GM12878 (cell line): ENCODE measurements at regions of chr15 and their contacts with region 1.

Region 1: DNA sequence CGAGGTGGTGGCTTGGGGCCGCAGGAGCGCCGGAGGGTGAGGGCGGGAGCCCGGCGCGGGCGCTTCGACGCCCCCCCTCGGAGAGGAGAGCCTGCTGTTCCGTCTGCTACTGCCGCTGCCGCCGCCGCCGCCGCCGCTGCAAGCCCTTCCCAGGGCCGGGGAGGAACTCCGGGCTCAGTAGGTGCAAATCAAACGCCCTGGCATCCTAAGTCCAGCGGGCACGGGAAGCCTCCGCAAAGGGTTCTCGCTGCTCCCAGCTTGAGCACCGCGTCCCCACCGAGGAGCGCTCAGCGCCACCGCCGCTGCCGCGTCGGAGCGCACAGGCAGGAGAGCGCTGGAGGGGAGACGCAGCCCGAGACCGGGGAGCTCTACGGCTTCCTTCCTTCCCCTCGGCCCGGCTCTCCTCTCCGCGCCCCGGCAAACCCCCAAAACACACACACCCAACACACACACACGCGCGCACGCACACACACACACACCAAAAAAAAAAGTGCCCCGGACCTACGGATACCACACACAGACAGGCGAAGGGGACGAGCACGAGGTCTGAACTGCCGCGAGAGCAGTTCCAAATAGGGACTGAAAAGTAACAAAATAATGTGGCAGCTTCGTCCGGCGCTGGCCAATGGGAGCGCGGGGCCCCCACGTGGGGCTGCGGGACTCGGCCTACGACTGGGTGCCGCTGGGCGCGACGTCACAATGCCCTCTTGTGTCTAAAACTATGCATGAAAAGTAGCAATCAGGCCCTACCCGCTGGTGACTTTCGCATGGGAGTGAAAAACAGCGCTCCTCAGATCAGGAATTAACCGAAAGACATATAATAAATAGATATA is at the start of gene TLE3:
- DNase-seq: peak; percentile 85
- ATAC-seq: peak; percentile 74
- H3K4me3 ChIP-seq: peak within 1 kb of the TSS; percentile 97
- H3K27ac ChIP-seq: peak within 1 kb of the TSS; percentile 79
- H3K4me1 ChIP-seq: peaks cover 25% of the 10 kb centered on the region
- H3K27me3 ChIP-seq: peaks cover 3 to 8% of the 10 kb centered on the region in 2 experiments; a peak in 3 of 4 replicates
- CTCF ChIP-seq: peak; percentile 32 to 61 (median 45); a peak in 5 of 6 replicates
- EP300 ChIP-seq: no peak
- POLR2A ChIP-seq: peak; percentile 90
- RAD21 ChIP-seq: peak; percentile 63
- polyA plus RNA-seq, gene TLE3: 1.2 to 2.2 TPM

Region 2: DNA sequence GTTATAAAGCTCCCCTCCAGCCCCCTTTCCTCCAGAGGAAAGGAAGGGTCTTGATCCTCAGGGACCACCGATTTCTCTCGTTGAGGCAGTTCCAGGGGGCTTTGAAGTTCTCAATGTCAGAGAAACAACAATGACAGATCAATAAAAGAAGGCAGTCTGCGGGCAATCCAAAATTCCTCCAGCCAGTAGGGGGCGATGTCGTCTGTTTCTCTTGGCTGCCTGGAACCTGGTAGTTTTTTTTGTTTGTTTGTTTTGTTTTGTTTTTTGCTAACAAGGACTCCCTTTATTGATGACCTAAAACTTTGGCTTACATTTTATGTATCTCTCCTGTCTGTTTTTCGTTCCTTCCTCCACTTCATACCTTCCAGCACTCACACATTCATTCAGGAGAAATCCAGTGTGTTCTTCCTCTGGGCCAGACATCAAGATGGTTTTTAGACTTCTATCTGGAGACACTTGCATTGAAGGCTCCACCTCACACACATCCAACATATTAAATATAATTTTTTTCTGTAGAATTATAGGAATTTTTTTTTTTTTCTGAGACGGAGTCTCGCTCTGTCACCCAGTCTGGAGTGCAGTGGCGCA is 368.3 kb before region 1 on chr15:
- CTCF ChIA-PET with region 1: interaction called, 6 read pairs
- POLR2A ChIA-PET with region 1: no interaction called
- RAD21 ChIA-PET with region 1: interaction called, 6 read pairs
- SMC1A ChIA-PET with region 1: interaction called, 4 read pairs
- in situ Hi-C with region 1: no loop called
- intact Hi-C with region 1: loop called (anchors 5 kb)
- DNase-seq: no peak
- ATAC-seq: peak; percentile 55; the same call in 2 of the 3 replicates
- H3K4me3 ChIP-seq: no peak overlapping the region
- H3K27ac ChIP-seq: no peak overlapping the region
- H3K4me1 ChIP-seq: peaks cover 8% of the 10 kb centered on the region; the same call in 1 of the 2 replicates
- H3K27me3 ChIP-seq: peaks cover 0 to 5% of the 10 kb centered on the region in 2 experiments; a peak in 2 of 4 replicates
- CTCF ChIP-seq: peak; percentile 67 to 82 (median 71)
- EP300 ChIP-seq: no peak
- POLR2A ChIP-seq: no peak
- RAD21 ChIP-seq: peak; percentile 83

Region 3: DNA sequence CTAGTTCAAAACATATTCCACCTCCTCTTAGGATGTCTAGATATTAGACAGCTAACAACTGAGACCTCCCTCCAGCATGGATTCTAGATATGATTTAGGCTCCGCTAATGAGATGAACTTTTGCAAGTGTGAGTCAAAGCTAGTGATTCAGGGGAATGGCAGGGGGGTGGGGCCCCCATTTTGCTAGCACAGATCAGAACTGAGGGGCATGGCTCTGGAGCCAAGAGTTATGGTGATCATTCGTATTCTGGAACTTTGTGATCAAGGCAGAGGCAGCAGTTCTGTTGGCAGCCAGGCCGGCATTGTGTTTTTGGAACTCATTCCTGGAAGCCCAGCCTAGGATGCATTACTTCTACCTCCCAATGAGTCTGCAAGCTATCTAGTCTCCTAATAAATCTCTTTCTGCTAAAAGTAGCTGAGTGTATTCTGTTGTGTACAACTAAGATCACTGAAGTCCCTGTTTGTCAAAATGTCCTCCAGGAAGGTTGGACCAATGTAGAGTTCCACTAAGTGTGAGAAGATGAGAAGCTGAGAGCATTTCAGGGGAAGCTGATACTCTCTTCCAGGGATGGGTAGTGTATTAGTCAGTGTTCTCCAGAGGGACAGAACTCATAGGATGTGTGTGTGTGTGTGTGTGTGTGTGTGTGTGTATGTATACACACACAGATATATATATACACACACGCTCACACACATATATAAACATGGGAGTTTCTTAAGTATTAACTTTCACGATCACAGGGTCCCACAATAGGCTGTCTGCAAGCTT is 312.6 kb before region 1 on chr15:
- CTCF ChIA-PET with region 1: no interaction called
- POLR2A ChIA-PET with region 1: no interaction called
- RAD21 ChIA-PET with region 1: no interaction called
- SMC1A ChIA-PET with region 1: no interaction called
- in situ Hi-C with region 1: no loop called
- intact Hi-C with region 1: no loop called
- DNase-seq: no peak
- ATAC-seq: no peak
- H3K4me3 ChIP-seq: no peak overlapping the region
- H3K27ac ChIP-seq: no peak overlapping the region
- H3K4me1 ChIP-seq: no peaks in the 10 kb centered on the region
- H3K27me3 ChIP-seq: no peaks in the 10 kb centered on the region; a peak in 1 of 4 replicates
- CTCF ChIP-seq: no peak
- EP300 ChIP-seq: no peak
- POLR2A ChIP-seq: no peak
- RAD21 ChIP-seq: no peak

Region 4: DNA sequence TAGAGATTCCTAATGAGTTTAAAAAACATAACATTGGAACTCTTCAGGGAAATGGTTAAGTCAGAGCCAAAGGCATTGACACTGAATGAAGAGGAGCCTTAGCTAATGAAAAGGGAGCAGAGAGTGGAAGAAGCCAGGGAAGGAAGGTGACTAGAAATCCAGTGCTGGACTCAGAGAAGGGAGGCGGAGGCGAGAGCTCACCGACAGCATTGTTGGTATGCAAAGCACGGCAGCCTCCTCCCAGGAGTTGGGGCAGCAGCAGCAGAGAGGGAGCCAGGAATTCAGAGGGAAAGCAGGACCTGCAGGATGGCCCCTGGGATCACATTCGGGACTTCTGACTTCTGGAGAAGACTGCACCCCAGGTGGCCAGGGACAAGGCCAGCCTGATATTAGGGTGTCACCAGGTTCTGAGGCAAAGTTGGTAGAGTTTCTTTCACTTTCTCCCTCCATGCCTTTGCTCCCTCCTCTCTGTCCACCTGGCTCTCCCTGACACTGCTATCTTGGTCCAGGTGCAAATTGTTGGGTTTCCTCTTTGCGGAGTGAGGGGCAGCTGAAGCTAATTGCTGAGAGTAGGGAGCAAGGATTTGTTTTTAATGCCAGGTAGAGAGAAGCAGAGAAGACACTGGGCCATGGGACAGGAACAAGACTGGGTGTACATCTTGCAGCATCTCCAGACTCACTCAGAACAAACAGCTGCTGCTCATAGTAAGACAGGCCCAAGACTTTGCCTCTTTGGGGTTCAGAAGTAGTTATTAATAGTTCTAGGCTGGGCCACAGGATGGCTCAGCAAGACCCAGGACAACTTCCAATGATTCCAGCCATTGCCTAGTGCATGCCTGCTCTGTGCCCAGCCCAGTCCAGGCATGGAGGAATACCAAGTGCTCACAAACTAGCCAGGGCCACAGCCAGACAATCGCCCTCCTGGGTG is 157.8 kb before region 1 on chr15:
- CTCF ChIA-PET with region 1: no interaction called
- POLR2A ChIA-PET with region 1: no interaction called
- RAD21 ChIA-PET with region 1: no interaction called
- SMC1A ChIA-PET with region 1: no interaction called
- in situ Hi-C with region 1: no loop called
- intact Hi-C with region 1: no loop called
- DNase-seq: no peak
- ATAC-seq: no peak
- H3K4me3 ChIP-seq: no peak overlapping the region
- H3K27ac ChIP-seq: no peak overlapping the region
- H3K4me1 ChIP-seq: no peaks in the 10 kb centered on the region
- H3K27me3 ChIP-seq: peaks cover 0 to 2% of the 10 kb centered on the region in 2 experiments; a peak in 3 of 4 replicates
- CTCF ChIP-seq: no peak
- EP300 ChIP-seq: no peak
- POLR2A ChIP-seq: no peak
- RAD21 ChIP-seq: no peak

Region 5: GRCh38 chr15:69976366-69976994 is 121.1 kb before region 1 on chr15:
- CTCF ChIA-PET with region 1: interaction called, 23 read pairs
- POLR2A ChIA-PET with region 1: interaction called, 4 read pairs
- RAD21 ChIA-PET with region 1: interaction called, 15 read pairs
- SMC1A ChIA-PET with region 1: interaction called, 12 read pairs
- in situ Hi-C with region 1: no loop called
- intact Hi-C with region 1: loop called (anchors 1 kb)
- DNase-seq: no peak
- ATAC-seq: peak; percentile 40; the same call in 2 of the 3 replicates
- H3K4me3 ChIP-seq: no peak overlapping the region
- H3K27ac ChIP-seq: no peak overlapping the region
- H3K4me1 ChIP-seq: peaks cover 30% of the 10 kb centered on the region
- H3K27me3 ChIP-seq: no peaks in the 10 kb centered on the region; a peak in 1 of 4 replicates
- CTCF ChIP-seq: no peak
- EP300 ChIP-seq: no peak
- POLR2A ChIP-seq: no peak
- RAD21 ChIP-seq: no peak

Region 6: DNA sequence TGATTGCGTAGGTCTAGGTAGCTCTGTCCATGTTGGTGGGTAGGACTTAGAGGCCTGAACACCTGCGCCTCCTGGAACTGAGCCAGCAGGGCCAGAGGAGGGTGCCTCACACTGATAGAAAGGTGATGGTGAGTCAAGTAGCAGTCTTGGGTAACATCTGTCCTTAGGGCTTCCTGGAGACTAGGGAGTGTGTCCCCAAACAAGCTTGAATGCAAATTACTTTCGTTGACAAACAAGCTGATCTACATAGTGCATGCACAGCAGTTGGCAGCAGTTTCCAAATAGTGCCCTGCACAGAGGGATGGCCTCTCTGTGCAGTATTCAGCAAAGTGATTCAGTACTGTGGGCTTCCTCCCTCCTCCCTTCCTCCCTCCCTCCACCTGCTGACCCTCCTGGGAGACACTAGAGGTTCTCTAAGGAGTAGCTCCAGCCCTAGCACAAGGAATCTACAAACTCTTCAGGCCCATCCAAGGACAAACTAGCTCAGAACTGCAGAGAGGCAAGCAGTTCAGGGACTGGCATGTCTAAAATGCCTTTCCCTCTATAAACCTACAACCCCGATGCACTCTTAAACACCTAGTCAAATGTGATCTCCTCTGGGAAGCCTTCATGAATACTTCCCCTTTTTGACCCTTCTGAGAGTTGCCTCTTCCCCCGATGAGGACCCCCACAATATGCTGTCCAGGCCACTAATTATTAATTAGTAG is 60.8 kb before region 1 on chr15:
- CTCF ChIA-PET with region 1: interaction called, 10 read pairs
- POLR2A ChIA-PET with region 1: interaction called, 17 read pairs
- RAD21 ChIA-PET with region 1: interaction called, 16 read pairs
- SMC1A ChIA-PET with region 1: interaction called, 12 read pairs
- in situ Hi-C with region 1: no loop called
- intact Hi-C with region 1: loop called (anchors 5 kb)
- DNase-seq: peak; percentile 88
- ATAC-seq: peak; percentile 81
- H3K4me3 ChIP-seq: peak overlapping the region; percentile 25; the same call in 1 of the 2 replicates
- H3K27ac ChIP-seq: peak overlapping the region; percentile 68
- H3K4me1 ChIP-seq: peaks cover 40% of the 10 kb centered on the region
- H3K27me3 ChIP-seq: no peaks in the 10 kb centered on the region
- CTCF ChIP-seq: no peak
- EP300 ChIP-seq: peak in 1 of 2 experiments; percentile 60; a peak in 1 of 4 replicates
- POLR2A ChIP-seq: no peak
- RAD21 ChIP-seq: no peak

Region 7: DNA sequence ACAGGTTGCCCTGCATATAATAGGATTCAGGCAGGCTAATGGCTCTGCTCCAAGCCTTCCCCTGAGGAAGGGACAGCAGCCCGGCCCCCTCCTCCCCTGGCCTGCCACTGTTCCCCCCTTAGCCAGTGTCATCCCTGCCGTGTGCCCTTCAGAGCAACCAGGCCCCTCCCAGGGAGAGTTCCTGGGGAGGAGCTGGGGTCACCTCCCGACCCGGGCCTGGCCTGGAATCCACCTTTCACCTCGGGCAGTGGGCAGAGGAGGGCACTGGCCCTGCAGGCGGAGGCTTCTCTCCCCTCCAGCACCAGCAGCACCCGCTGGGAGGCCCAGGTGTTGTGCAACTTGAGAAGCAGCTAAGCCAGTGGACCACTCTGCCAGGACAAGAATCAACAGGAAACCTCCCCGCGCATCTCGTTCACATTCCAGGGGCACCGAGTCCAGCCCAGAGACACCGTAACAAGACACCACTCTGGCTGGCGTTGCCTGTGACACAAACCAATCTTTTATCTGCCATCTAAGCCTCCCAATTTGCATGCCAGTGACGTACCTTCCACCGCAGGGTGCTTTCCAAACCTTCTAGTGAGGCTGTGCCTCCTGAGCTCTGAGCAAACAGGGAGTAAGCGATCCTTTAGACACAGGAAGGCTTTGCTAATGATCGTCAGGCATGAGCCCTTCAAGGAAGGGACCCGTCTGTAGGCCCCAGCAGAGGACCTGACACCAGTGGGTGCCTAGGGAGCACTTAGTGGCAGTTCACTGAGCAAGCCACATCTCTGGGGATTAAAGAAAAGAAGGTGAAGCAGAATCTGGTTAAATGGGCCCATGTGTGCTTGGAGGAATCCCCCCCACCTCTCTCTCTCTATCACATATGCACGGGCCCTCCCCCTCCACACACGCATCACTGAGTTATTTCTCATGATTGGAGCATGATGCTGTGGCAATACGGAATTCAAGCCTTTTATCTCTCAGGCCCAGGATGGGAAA is 99.0 kb after region 1 on chr15:
- CTCF ChIA-PET with region 1: no interaction called
- POLR2A ChIA-PET with region 1: no interaction called
- RAD21 ChIA-PET with region 1: interaction called, 5 read pairs
- SMC1A ChIA-PET with region 1: interaction called, 6 read pairs
- in situ Hi-C with region 1: no loop called
- intact Hi-C with region 1: loop called (anchors 5 kb)
- DNase-seq: peak; percentile 90
- ATAC-seq: peak; percentile 95
- H3K4me3 ChIP-seq: no peak overlapping the region
- H3K27ac ChIP-seq: peak overlapping the region; percentile 45
- H3K4me1 ChIP-seq: peaks cover 25% of the 10 kb centered on the region
- H3K27me3 ChIP-seq: no peaks in the 10 kb centered on the region
- CTCF ChIP-seq: no peak
- EP300 ChIP-seq: peak; percentile 63 to 78; a peak in 3 of 4 replicates
- POLR2A ChIP-seq: peak; percentile 39; the same call in 1 of the 2 replicates
- RAD21 ChIP-seq: no peak

Region 8: DNA sequence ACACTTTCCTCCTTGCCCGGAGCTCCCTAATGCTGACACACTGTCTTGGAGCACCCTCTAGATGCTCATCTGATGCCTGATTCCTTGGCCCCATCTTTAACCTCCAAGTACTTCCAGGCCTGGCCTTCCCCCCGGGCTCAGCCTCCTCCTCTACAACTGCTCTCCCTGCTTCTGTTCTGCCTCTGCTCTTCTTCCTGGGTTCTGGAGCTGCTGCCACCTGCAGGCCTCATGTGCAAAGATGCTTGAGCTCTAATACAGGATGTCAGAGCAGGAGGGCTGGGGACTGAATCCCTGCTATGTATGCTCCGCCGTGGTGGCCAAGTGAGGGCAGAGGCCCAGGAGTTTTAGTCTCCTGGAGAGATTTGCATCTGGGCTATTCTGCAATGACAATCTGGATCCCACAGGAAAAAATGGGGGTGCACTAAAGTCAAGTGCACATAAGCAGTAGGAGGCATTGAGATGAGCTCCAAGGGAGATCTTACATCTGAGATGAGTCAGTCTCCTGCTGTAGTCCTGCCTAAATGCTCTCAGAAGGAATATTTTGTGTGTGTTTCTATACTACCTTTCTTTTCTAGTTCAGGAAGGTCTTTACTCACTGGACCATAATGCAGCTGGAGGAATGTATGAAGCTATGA is 369.5 kb after region 1 on chr15:
- CTCF ChIA-PET with region 1: interaction called, 7 read pairs
- POLR2A ChIA-PET with region 1: no interaction called
- RAD21 ChIA-PET with region 1: interaction called, 4 read pairs
- SMC1A ChIA-PET with region 1: interaction called, 3 read pairs
- in situ Hi-C with region 1: no loop called
- intact Hi-C with region 1: loop called (anchors 5 kb)
- DNase-seq: no peak
- ATAC-seq: peak; percentile 66
- H3K4me3 ChIP-seq: no peak overlapping the region
- H3K27ac ChIP-seq: no peak overlapping the region
- H3K4me1 ChIP-seq: peaks cover 36% of the 10 kb centered on the region
- H3K27me3 ChIP-seq: no peaks in the 10 kb centered on the region
- CTCF ChIP-seq: peak; percentile 66 to 78 (median 72)
- EP300 ChIP-seq: no peak
- POLR2A ChIP-seq: no peak
- RAD21 ChIP-seq: peak; percentile 71